ENCODE measurements at regions of chr1 and their contacts with region 1.

Region 1: GRCh38 chr1:89065079-89065868 is at the start of gene GBP1:
- DNase-seq: peak in 1 of 2 experiments; percentile 79
- H3K4me3 ChIP-seq: peak within 1 kb of the TSS; percentile 26; the same call in 1 of the 2 replicates
- H3K27ac ChIP-seq: 0 out of 2 replicates have a peak within 1 kb of the TSS, but pooled peaks have one; percentile 1
- H3K4me1 ChIP-seq: 0 out of 2 replicates have a peak, but pooled peaks cover 7% of the 10 kb centered on the region
- H3K27me3 ChIP-seq: no peaks in the 10 kb centered on the region
- CTCF ChIP-seq: no peak
- total RNA-seq, gene GBP1: 6.0 and 7.3 TPM in 2 replicates

Region 2: DNA sequence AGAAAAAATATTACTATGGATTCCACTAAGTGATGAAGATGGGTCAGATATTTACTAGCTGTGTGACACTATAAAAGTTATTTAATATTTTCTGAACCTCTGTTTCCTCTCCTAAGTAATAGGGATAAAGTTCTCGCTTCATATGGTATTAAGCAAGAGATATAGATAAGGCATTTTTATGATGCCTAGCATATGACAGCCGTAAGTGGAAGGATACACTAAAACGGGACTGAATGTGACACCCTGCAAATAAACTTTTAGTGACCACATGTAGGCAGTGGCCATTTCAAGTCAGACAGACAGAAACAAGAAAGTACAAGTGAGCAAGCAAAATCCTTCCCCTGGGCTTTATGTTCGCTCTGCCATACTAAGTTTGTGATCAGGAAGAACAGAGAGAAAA is 56.8 kb before region 1 on chr1:
- CTCF ChIA-PET with region 1: no interaction called
- POLR2A ChIA-PET with region 1: no interaction called
- intact Hi-C with region 1: no loop called
- DNase-seq: no peak
- H3K4me3 ChIP-seq: no peak overlapping the region
- H3K27ac ChIP-seq: no peak overlapping the region
- H3K4me1 ChIP-seq: no peaks in the 10 kb centered on the region
- H3K27me3 ChIP-seq: no peaks in the 10 kb centered on the region
- CTCF ChIP-seq: no peak

Region 3: DNA sequence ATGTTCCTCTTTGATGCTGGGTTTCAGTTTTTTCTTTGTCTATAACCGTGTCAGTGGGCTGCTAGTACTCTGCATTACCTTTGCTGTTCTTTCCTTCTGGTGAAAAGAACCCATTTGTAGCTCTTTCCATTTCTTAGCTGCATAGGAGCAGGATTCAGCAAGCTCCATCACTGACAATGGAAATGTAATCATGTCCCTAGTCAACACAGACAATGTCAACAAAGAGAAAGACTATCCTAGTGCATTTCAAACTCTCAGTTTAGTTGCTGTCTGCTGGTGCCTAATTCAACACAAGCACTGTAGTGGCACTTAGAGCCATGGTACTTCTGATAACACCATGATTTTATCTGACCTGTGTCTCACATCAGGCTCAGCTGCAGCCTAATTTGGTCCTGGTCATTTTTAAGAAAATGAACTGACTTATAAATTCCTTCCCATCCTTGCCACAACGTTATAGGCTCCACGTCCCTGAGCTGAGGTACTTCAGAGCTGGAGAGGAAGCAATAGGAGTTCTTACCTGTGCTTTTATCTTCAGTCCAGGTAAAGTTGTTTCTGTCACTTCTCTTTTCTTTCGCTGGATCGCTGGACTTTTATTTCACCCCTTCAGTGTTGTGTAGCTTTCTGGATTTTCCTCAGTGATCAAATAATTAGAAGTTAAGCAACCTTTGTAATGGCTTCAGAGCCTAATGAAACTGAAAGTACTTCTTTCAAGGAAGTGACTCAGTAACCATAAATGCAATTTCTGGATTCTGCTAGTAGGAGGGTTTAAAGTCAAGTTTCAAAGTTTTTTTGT is 42.9 kb before region 1 on chr1 and contains the start of gene GBP3:
- CTCF ChIA-PET with region 1: no interaction called
- POLR2A ChIA-PET with region 1: interaction called, 11 read pairs
- intact Hi-C with region 1: loop called (anchors 2 kb)
- DNase-seq: peak in 1 of 2 experiments; percentile 82
- H3K4me3 ChIP-seq: peak within 1 kb of the TSS; percentile 57
- H3K27ac ChIP-seq: peak within 1 kb of the TSS; percentile 78
- H3K4me1 ChIP-seq: peaks cover 41% of the 10 kb centered on the region
- H3K27me3 ChIP-seq: no peaks in the 10 kb centered on the region
- CTCF ChIP-seq: no peak
- total RNA-seq, gene GBP3: 17.7 and 22.6 TPM in 2 replicates

Region 4: GRCh38 chr1:89261926-89262515 is 196.7 kb after region 1 on chr1:
- CTCF ChIA-PET with region 1: no interaction called
- POLR2A ChIA-PET with region 1: no interaction called
- intact Hi-C with region 1: no loop called
- DNase-seq: no peak
- H3K4me3 ChIP-seq: no peak overlapping the region
- H3K27ac ChIP-seq: no peak overlapping the region
- H3K4me1 ChIP-seq: no peaks in the 10 kb centered on the region; the same call in 1 of the 2 replicates
- H3K27me3 ChIP-seq: no peaks in the 10 kb centered on the region
- CTCF ChIP-seq: no peak

Measured in PC-9 (cell line).